Heart right ventricle (tissue), 16 donors: ENCODE measurements at regions of chr17 and their contacts with region 1.

Region 1: DNA sequence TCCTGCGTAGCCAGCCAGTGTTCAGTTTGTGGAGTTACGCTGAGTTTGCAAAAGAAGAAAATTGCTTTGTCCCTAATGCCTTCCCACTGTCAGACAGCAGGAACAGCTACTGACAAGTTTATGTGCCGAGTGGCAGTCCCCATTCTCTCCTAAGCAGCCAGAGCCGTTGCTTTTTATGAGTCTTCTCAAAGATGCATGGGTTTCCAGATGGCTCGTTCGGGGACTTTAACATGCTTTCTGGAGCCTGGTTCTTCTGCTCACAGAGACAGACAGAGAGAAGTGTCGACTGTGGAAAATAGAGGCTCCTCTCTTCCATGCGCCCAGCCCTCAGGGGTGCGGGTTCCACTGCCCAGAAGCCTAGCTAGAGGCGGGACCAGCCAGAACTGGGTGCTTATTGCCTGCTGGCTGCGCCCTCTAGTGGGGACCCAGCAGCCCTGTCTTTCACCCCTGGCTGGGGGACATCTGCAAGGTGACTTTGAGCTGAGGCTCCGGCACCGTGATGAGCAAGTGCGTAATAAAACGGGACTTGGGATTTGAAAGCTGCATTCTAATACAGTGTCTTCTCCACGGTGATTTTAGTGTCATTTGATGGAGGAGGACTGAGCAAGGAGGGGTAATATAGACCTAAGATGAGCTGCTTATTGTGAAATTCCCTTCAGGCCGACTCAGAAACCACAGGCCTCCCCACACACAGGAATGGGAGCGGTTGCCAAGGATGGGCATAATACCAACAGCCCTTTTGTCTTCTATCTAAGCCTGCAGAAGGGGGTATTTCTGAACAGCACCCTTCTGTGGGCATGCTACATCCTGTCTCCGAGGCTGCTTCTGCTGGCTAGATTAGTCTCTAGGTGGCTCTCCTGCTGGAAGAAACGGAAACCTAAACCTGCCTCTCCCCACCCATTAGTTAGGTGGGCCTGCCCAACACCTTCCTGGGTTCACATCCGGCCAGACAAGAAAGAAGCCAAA is 73.1 kb downstream of the CCDC182 start:
- DNase-seq: peak; percentile 77 to 81
- ATAC-seq: peak; percentile 89 to 96 (median 92)
- H3K4me3 ChIP-seq: no peak overlapping the region
- H3K27ac ChIP-seq: peak overlapping the region in 5 of 10 donors; percentile 20 to 52 (median 26)
- H3K4me1 ChIP-seq: peaks cover 0 to 37% (median 10%) of the 10 kb centered on the region in 9 donors
- H3K27me3 ChIP-seq: no peaks in the 10 kb centered on the region
- CTCF ChIP-seq: peak; percentile 80 to 98 (median 97)

Region 2: GRCh38 chr17:57243171-57243948 is 428.6 kb before region 1 on chr17:
- intact Hi-C with region 1: loop called in 6 of 10 experiments (anchors 2 to 10 kb)
- DNase-seq: peak; percentile 63 to 67
- ATAC-seq: peak; percentile 37 to 86 (median 72)
- H3K4me3 ChIP-seq: no peak overlapping the region
- H3K27ac ChIP-seq: peak overlapping the region in 4 of 10 donors; percentile 19 to 37 (median 27)
- H3K4me1 ChIP-seq: peaks cover 0 to 17% (median 13%) of the 10 kb centered on the region in 9 donors
- H3K27me3 ChIP-seq: no peaks in the 10 kb centered on the region
- CTCF ChIP-seq: peak; percentile 97 to 99 (median 98)

Region 3: DNA sequence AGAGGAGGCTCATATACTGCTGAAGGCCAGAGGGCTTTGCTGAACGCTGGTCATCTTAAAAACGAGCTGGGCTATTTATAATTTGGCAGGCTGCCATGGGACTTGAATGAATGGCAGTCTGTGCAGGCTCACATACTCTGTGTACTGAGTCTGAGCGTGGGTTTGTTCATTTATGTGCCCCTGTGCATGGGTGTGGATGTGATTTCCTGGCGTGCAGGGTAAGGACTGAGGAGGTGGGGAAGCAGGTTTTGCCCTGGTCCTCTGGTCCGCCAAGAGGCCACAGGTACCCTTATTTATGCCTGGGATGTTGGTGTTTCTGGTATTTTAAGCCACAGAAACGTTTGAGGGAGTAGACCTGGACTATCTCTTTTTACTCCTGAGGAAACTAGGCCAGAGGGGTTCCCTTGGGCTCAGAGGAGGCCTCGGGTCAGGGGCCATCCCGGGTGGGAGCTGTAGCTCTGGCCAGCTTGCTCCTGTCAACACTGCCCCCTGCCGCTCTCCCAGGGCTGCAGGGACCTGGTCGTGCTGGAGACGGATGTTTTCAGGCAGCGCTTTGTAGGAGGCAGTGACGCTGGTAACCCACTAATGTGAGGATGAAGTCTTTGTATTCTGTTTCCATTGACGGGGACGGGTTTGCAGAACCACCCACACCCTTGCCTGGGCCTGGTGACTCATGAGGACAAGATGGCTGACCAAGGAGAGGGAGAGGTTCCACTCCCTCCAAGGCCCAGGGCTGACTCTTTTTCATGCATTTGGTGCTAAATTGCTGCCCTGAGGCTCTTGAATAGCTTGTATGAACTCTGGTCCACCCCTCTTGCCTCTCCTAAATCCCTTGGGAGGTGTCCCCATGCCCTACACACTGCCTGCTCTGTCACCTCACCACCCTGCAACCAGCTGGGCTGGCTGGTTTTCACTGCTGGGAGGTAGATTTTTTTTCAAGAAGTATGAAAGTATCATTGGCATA is 231.1 kb before region 1 on chr17:
- intact Hi-C with region 1: loop called in 2 of 10 experiments (anchors 10 kb)
- DNase-seq: peak; percentile 72 to 88
- ATAC-seq: peak; percentile 78 to 89 (median 84)
- H3K4me3 ChIP-seq: no peak overlapping the region
- H3K27ac ChIP-seq: peak overlapping the region; percentile 42 to 83 (median 67)
- H3K4me1 ChIP-seq: peaks cover 23 to 91% (median 61%) of the 10 kb centered on the region in 9 donors
- H3K27me3 ChIP-seq: no peaks in the 10 kb centered on the region
- CTCF ChIP-seq: peak in 8 of 9 donors; percentile 30 to 79 (median 64)

Region 4: GRCh38 chr17:57615836-57616757 is 55.9 kb before region 1 on chr17:
- intact Hi-C with region 1: no loop called
- DNase-seq: no peak
- ATAC-seq: peak in 3 of 8 donors; percentile 43 to 58 (median 57)
- H3K4me3 ChIP-seq: no peak overlapping the region
- H3K27ac ChIP-seq: no peak overlapping the region
- H3K4me1 ChIP-seq: peaks cover 0 to 14% (median 6%) of the 10 kb centered on the region in 9 donors
- H3K27me3 ChIP-seq: no peaks in the 10 kb centered on the region
- CTCF ChIP-seq: no peak

Region 5: DNA sequence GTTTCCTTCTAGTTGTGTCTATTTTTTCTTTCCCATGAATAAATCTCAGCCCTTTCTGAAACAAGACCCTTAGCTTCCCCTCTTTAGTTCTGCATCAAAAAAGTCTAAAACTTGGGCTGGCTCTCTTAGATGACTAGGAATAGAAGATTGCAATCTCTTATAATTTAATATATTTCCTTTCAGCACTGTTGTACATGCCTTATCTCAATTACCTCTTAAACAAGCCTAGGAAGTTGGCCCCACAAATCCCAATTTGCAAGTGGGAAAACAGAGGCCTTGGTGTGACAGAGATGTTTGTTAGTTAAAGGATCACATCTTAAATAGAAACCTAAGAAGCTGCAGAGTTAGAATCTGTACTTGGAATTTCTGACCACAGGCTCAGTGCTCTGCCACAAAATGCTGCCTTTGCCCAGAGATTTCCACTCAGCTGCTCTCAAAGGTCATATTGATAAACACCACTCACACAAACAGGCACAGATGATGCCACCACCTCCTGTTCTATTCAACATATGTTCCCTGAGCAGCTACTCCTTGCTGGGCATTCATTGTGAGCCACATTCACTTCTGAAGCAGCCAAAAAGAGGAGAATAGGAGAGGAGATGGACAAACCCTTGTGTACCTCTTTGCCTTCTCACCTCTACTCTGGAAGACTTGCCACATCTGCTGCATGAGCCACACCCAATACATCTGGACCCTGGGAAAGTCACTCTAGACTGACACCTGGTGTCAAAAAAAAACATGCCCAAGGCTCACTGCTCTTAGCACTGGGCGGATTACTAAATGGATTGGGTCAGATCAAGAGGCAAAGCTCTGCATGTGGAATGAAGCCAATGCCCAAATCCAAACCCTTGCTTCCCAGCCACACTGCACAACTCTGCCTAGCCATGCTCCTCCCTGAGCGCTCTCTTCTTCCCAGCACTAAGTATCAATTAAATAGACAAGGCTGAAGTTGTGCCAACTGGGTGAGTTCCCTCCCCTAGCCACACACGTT is 67.7 kb after region 1 on chr17:
- intact Hi-C with region 1: loop called in 3 of 10 experiments (anchors 5 to 10 kb)
- DNase-seq: no peak
- ATAC-seq: peak in 3 of 8 donors; percentile 49 to 66 (median 63)
- H3K4me3 ChIP-seq: no peak overlapping the region
- H3K27ac ChIP-seq: no peak overlapping the region
- H3K4me1 ChIP-seq: no peaks in the 10 kb centered on the region
- H3K27me3 ChIP-seq: peaks cover 0 to 7% (median 0%) of the 10 kb centered on the region in 7 donors
- CTCF ChIP-seq: peak in 7 of 9 donors; percentile 33 to 47 (median 40)

Region 6: GRCh38 chr17:58136669-58137283 is 464.8 kb after region 1 on chr17:
- intact Hi-C with region 1: no loop called
- DNase-seq: no peak
- ATAC-seq: no peak
- H3K4me3 ChIP-seq: no peak overlapping the region
- H3K27ac ChIP-seq: no peak overlapping the region
- H3K4me1 ChIP-seq: no peaks in the 10 kb centered on the region
- H3K27me3 ChIP-seq: peaks cover 0 to 46% (median 21%) of the 10 kb centered on the region in 7 donors
- CTCF ChIP-seq: peak in 6 of 9 donors; percentile 7 to 32 (median 20)